MCF 10A (cell line): ENCODE measurements at regions of chr18 and their contacts with region 1.

Region 1: GRCh38 chr18:67515945-67516538 is 478 bp downstream of the DSEL start:
- DNase-seq: peak; percentile 92
- H3K4me3 Mint-ChIP-seq: peak overlapping the region; percentile 86
- H3K27ac Mint-ChIP-seq: peak overlapping the region; percentile 68
- H3K4me1 Mint-ChIP-seq: peaks cover 51% of the 10 kb centered on the region
- H3K27me3 Mint-ChIP-seq: no peaks in the 10 kb centered on the region
- CTCF ChIP-seq: peak; percentile 67

Region 2: GRCh38 chr18:66560092-66560491 is 956.0 kb before region 1 on chr18:
- CTCF ChIA-PET with region 1: no interaction called
- POLR2A ChIA-PET with region 1: no interaction called
- intact Hi-C with region 1: no loop called
- DNase-seq: peak; percentile 61
- H3K4me3 Mint-ChIP-seq: no peak overlapping the region
- H3K27ac Mint-ChIP-seq: no peak overlapping the region
- H3K4me1 Mint-ChIP-seq: no peaks in the 10 kb centered on the region
- H3K27me3 Mint-ChIP-seq: peaks cover 40% of the 10 kb centered on the region
- CTCF ChIP-seq: peak; percentile 54

Region 3: GRCh38 chr18:67590571-67591141 is 74.6 kb after region 1 on chr18:
- CTCF ChIA-PET with region 1: interaction called, 10 read pairs
- POLR2A ChIA-PET with region 1: interaction called, 6 read pairs
- intact Hi-C with region 1: loop called (anchors 5 kb)
- DNase-seq: peak; percentile 31
- H3K4me3 Mint-ChIP-seq: no peak overlapping the region
- H3K27ac Mint-ChIP-seq: no peak overlapping the region
- H3K4me1 Mint-ChIP-seq: peaks cover 4% of the 10 kb centered on the region
- H3K27me3 Mint-ChIP-seq: no peaks in the 10 kb centered on the region
- CTCF ChIP-seq: no peak

Region 4: DNA sequence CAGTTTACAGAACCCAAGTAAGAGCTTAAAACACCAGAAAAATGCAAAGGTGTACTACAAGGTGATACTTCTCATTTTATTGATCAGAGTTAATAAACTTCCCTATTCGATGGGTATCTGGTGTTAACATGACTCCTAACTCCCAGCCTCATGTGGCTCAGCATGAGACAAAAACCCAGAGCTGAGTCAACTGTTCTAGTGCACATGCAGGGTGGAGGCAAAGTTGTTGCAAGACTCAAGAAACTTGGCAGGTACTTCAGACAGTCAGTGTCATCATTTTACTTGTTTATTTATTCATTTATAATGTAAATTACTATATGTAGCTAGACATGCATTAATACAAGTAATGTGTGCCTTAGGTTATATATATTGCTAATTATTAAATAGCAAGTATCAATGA is 217.1 kb after region 1 on chr18:
- CTCF ChIA-PET with region 1: interaction called, 6 read pairs
- POLR2A ChIA-PET with region 1: interaction called, 56 read pairs
- intact Hi-C with region 1: loop called (anchors 2 kb)
- DNase-seq: peak; percentile 87
- H3K4me3 Mint-ChIP-seq: no peak overlapping the region
- H3K27ac Mint-ChIP-seq: no peak overlapping the region
- H3K4me1 Mint-ChIP-seq: peaks cover 21% of the 10 kb centered on the region
- H3K27me3 Mint-ChIP-seq: no peaks in the 10 kb centered on the region
- CTCF ChIP-seq: no peak

Region 5: DNA sequence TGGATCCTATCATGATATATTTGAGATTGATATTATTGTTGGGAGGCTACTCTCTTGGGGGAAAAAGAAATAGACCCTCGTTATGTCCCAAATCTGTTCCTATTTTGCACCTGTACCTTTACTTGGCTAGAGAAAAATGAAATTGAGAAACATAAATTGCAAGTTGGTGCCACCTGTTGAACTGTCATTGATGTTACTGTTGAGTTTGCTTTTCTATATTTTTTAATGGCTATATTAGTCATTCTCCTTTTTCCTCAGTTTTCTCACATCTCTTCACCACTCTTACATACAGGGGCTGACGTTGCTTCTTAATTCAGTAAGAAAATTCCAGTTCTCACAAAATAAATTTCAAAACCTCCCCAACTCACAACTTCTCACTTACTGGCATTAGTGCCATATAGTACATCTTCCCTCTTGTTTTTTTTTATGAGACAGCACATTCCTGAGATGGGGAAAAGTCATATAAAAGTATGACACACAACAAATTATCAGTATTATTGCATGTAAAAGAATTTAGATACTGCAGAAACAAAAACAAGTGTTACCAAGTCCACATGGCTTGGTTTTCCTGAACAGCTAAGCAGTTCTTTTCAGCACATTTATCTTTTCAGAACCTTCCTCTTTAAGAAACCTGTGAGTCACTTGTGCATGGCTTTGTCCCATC is 348.8 kb after region 1 on chr18:
- CTCF ChIA-PET with region 1: interaction called, 10 read pairs
- POLR2A ChIA-PET with region 1: interaction called, 3 read pairs
- intact Hi-C with region 1: loop called (anchors 2 kb)
- DNase-seq: peak; percentile 17
- H3K4me3 Mint-ChIP-seq: no peak overlapping the region
- H3K27ac Mint-ChIP-seq: no peak overlapping the region
- H3K4me1 Mint-ChIP-seq: peaks cover 12% of the 10 kb centered on the region
- H3K27me3 Mint-ChIP-seq: no peaks in the 10 kb centered on the region
- CTCF ChIP-seq: no peak

Region 6: DNA sequence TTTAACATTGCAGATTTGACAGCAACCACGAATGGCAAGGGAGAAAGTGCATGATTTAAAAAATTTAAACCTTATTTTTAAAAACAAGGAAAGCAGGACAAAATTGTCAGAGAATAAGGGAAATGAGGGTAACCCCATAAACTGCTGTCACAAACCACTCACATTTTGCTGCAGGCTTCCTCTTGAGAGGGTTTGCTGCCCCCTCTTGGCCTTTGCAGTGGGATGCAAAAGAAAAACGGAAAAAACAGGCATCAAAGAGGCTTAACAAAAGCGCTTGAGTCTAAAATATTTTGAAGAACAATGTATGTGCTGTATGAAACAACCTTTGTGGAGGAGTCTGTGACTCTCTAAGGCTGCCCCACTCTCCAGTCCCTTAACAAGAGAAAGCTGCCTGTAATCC is 1107.3 kb after region 1 on chr18:
- CTCF ChIA-PET with region 1: interaction called, 6 read pairs
- POLR2A ChIA-PET with region 1: no interaction called
- intact Hi-C with region 1: loop called (anchors 1 kb)
- DNase-seq: peak; percentile 76
- H3K4me3 Mint-ChIP-seq: no peak overlapping the region
- H3K27ac Mint-ChIP-seq: no peak overlapping the region
- H3K4me1 Mint-ChIP-seq: no peaks in the 10 kb centered on the region
- H3K27me3 Mint-ChIP-seq: no peaks in the 10 kb centered on the region
- CTCF ChIP-seq: peak; percentile 78

Region 7: GRCh38 chr18:68735483-68736343 is 1219.7 kb after region 1 on chr18:
- CTCF ChIA-PET with region 1: interaction called, 3 read pairs
- POLR2A ChIA-PET with region 1: no interaction called
- intact Hi-C with region 1: loop called (anchors 10 kb)
- DNase-seq: peak; percentile 70
- H3K4me3 Mint-ChIP-seq: no peak overlapping the region
- H3K27ac Mint-ChIP-seq: no peak overlapping the region
- H3K4me1 Mint-ChIP-seq: peaks cover 15% of the 10 kb centered on the region
- H3K27me3 Mint-ChIP-seq: no peaks in the 10 kb centered on the region
- CTCF ChIP-seq: peak; percentile 75